Common myeloid progenitor, CD34-positive (primary cell): ENCODE measurements at regions of chr22 and their contacts with region 1.

Region 1: DNA sequence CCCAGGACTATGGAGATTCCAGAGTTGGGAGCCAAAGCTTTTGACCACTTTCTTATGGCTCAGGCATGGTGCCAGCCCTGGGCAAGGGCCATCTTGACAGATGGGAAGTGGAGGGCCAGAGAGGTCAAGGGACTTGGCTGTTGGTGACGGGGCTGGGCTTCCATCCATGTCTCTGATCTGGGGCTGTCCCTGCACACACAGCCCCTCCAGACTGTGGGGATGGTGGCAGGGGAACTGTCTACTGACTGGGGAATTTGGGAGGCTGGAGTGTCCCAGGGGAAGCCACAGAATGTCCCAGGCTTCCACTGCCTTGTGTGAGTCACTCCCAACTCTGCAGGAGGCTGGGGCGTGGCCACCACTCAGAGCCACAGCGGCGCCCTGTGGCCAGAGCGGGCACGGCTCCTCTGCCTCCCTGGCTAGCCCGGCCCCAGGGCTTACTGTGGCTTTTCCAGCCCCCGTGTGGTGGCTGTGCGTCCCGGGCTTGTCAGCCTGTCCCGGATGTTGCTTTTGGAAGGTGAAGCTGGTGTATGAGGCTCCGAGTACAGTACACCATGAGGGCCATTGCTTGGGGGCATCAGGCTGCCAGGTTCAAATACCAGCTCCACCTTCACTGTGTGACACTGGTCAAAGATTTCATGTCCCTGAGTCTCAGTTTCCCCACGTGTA is 19.6 kb downstream of the C22orf23 start:
- DNase-seq: peak; percentile 85 to 92 (median 91)
- H3K4me3 ChIP-seq: peak overlapping the region in 1 of 7 experiments; percentile 38
- H3K27ac ChIP-seq: no peak overlapping the region
- H3K4me1 ChIP-seq: peaks cover 0 to 9% (median 4%) of the 10 kb centered on the region in 4 experiments
- H3K27me3 ChIP-seq: no peaks in the 10 kb centered on the region

Region 2: GRCh38 chr22:37905534-37906363 is 28.1 kb before region 1 on chr22 and contains the start of gene MICALL1:
- CTCF ChIA-PET with region 1: interaction called, 24 read pairs
- POLR2A ChIA-PET with region 1: no interaction called
- DNase-seq: peak; percentile 65 to 73 (median 66)
- H3K4me3 ChIP-seq: peak within 1 kb of the TSS; percentile 42 to 83 (median 72)
- H3K27ac ChIP-seq: peak within 1 kb of the TSS in 1 of 2 experiments; percentile 54
- H3K4me1 ChIP-seq: peaks cover 0 to 34% (median 26%) of the 10 kb centered on the region in 4 experiments
- H3K27me3 ChIP-seq: no peaks in the 10 kb centered on the region

Region 3: GRCh38 chr22:37953437-37954179 is 19.8 kb after region 1 on chr22 and contains the starts of genes C22orf23 and POLR2F:
- CTCF ChIA-PET with region 1: interaction called, 14 read pairs
- POLR2A ChIA-PET with region 1: no interaction called
- DNase-seq: peak; percentile 94 to 97 (median 95)
- H3K4me3 ChIP-seq: peak within 1 kb of the TSS; percentile 78 to 99 (median 90)
- H3K27ac ChIP-seq: peak within 1 kb of the TSS; percentile 58 to 85
- H3K4me1 ChIP-seq: peaks cover 0 to 23% (median 20%) of the 10 kb centered on the region in 4 experiments
- H3K27me3 ChIP-seq: peaks cover 0 to 19% (median 3%) of the 10 kb centered on the region in 5 experiments